H1 (cell line): ENCODE measurements at regions of chr14 and their contacts with region 1.

Region 1: GRCh38 chr14:90785471-90785870 is 30.8 kb downstream of the TTC7B start:
- DNase-seq: no peak
- H3K4me3 ChIP-seq: no peak overlapping the region
- H3K27ac ChIP-seq: no peak overlapping the region
- H3K4me1 ChIP-seq: no peaks in the 10 kb centered on the region; a peak in 1 of 7 replicates
- H3K27me3 ChIP-seq: no peaks in the 10 kb centered on the region; a peak in 1 of 7 replicates
- CTCF ChIP-seq: peak; percentile 55 to 76 (median 64)
- EP300 ChIP-seq: no peak
- POLR2A ChIP-seq: no peak
- RAD21 ChIP-seq: peak; percentile 23 to 49; a peak in 3 of 4 replicates

Region 2: GRCh38 chr14:90773705-90774104 is 11.8 kb before region 1 on chr14:
- CTCF ChIA-PET with region 1: interaction called, 14 read pairs
- POLR2A ChIA-PET with region 1: no interaction called
- DNase-seq: no peak
- H3K4me3 ChIP-seq: no peak overlapping the region
- H3K27ac ChIP-seq: no peak overlapping the region
- H3K4me1 ChIP-seq: no peaks in the 10 kb centered on the region; a peak in 1 of 7 replicates
- H3K27me3 ChIP-seq: no peaks in the 10 kb centered on the region
- CTCF ChIP-seq: no peak
- EP300 ChIP-seq: no peak
- POLR2A ChIP-seq: no peak
- RAD21 ChIP-seq: no peak

Region 3: DNA sequence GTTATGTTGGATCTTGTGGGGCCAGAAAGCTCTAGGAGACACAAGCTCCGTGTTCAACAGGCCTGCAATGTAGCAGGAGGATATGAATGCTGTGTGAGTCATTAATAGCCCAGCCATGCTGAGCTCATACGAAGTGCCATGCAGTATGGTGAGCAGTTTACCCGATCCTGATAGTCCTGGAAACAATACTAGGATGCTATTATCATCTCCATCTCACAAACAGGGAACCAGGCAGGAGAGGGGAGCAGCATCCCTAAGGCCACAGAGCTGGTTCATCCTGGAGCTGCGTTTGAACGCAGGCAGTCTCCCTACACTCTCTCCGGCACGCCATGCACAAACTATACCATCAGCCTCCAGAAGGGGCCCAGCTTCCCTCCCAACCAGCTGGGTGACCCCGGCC is 10.3 kb after region 1 on chr14:
- CTCF ChIA-PET with region 1: interaction called, 44 read pairs
- POLR2A ChIA-PET with region 1: interaction called, 3 read pairs
- DNase-seq: no peak
- H3K4me3 ChIP-seq: no peak overlapping the region
- H3K27ac ChIP-seq: no peak overlapping the region
- H3K4me1 ChIP-seq: peaks cover 0 to 5% (median 0%) of the 10 kb centered on the region in 4 experiments; a peak in 2 of 7 replicates
- H3K27me3 ChIP-seq: no peaks in the 10 kb centered on the region
- CTCF ChIP-seq: peak in 1 of 3 experiments; percentile 16; a peak in 1 of 4 replicates
- EP300 ChIP-seq: no peak
- POLR2A ChIP-seq: no peak
- RAD21 ChIP-seq: no peak

Region 4: DNA sequence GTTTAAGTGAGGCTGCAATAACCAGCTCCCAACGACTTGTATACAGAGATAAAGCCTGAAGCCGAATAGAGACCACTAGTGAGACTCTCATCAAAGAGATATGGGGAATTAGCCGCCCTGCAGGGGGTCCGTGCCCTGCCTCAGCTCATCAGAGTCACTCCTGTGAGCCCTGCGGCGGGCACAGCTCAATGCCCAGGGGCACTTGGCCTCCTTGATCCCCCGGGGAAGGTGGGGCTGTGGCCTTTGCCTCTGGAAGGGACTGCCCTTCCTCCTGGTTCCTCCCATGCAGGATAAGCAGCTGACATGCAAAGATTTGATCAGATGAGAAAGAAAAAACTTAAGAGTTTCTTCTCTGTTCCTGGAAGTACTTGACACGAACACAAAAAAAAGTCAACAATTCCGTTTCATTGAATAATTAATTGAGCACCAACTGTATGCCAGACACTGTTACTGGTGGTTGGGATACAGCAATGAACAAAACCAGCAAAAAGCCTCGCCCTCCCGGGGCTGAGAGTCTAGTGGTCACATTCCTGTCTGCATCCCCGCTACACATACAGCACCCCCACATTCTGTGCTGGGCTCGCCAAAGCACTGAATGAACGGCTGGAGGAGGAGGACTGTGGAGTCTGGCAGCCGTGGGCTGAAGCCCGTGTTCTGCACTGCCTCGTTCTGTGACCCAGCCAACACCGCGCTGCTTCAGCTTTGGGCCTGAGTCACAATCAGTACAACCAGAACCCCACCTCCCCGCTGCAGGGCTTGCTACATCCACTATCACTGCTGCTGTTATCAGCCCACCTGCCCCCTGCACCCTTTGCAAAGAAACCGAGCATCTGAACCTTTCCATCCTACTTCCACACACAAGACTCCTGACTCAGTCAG is 20.4 kb after region 1 on chr14:
- CTCF ChIA-PET with region 1: interaction called, 13 read pairs
- POLR2A ChIA-PET with region 1: no interaction called
- DNase-seq: no peak
- H3K4me3 ChIP-seq: no peak overlapping the region
- H3K27ac ChIP-seq: no peak overlapping the region
- H3K4me1 ChIP-seq: peaks cover 0 to 8% (median 1%) of the 10 kb centered on the region in 4 experiments; a peak in 3 of 7 replicates
- H3K27me3 ChIP-seq: no peaks in the 10 kb centered on the region
- CTCF ChIP-seq: no peak
- EP300 ChIP-seq: no peak
- POLR2A ChIP-seq: no peak
- RAD21 ChIP-seq: no peak